GM12878 (cell line): ENCODE measurements at regions of chr5 and their contacts with region 1.

Region 1: GRCh38 chr5:73663860-73664240 is 37.9 kb downstream of the ARHGEF28 start:
- DNase-seq: peak; percentile 76
- ATAC-seq: peak; percentile 64
- H3K4me3 ChIP-seq: no peak overlapping the region
- H3K27ac ChIP-seq: peak overlapping the region; percentile 69
- H3K4me1 ChIP-seq: peaks cover 30% of the 10 kb centered on the region
- H3K27me3 ChIP-seq: no peaks in the 10 kb centered on the region
- CTCF ChIP-seq: no peak
- EP300 ChIP-seq: peak in 1 of 2 experiments; percentile 33; a peak in 1 of 4 replicates
- POLR2A ChIP-seq: no peak
- RAD21 ChIP-seq: no peak

Region 2: DNA sequence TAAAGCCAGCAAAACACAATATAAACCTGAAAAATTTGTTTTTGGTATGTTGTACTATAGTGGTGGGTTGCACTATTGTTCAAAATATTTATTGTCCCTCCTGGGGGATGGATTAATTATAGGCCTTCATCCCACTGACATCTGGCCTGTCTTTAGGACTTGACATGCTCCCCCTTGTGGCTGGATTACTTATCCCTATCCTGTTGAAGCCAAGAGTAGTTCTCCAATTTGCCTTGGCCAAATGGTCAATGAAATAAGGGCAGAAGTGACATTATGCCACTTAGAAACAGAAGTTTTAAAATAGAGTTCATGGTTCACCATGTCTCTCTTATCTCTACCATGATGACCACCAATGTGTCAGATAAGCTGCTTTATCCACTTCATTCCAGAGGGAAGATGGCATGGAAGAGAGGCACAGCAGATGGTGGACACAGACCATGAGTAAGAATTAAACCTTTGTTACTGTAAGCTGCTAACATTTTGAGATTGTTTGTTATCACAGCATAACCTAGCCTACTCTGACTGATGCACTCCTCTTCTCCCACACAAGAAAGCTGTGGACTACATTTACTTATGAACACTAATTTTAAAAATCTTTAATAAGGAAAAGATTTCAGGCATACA is 67.0 kb before region 1 on chr5:
- CTCF ChIA-PET with region 1: interaction called, 5 read pairs
- POLR2A ChIA-PET with region 1: no interaction called
- RAD21 ChIA-PET with region 1: no interaction called
- SMC1A ChIA-PET with region 1: interaction called, 27 read pairs
- in situ Hi-C with region 1: no loop called
- intact Hi-C with region 1: no loop called
- DNase-seq: no peak
- ATAC-seq: peak; percentile 65
- H3K4me3 ChIP-seq: no peak overlapping the region
- H3K27ac ChIP-seq: no peak overlapping the region
- H3K4me1 ChIP-seq: no peaks in the 10 kb centered on the region
- H3K27me3 ChIP-seq: no peaks in the 10 kb centered on the region
- CTCF ChIP-seq: peak; percentile 29 to 61 (median 57)
- EP300 ChIP-seq: no peak
- POLR2A ChIP-seq: no peak
- RAD21 ChIP-seq: 0 out of 2 replicates have a peak, but pooled peaks have one; percentile 15

Region 3: DNA sequence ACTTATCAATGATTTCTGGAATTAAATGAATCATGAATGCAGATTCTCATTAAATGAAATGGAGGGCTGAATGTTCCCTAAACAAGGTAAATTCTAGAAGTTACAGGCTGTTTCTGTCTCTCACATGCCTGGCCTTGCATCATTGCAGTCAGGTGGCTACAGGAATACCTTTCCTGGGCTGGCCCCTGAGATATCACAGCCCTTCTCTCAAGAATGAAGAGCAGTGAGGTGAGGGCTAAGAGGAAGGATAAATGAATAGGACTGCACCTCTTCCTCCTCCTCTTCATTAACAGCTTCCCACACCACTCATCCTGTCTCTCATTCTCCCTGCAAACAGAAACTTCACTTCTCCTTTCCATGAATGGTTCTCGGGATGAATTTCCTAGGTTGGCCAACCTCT is 15.3 kb before region 1 on chr5:
- CTCF ChIA-PET with region 1: interaction called, 5 read pairs
- POLR2A ChIA-PET with region 1: interaction called, 6 read pairs
- RAD21 ChIA-PET with region 1: interaction called, 24 read pairs
- SMC1A ChIA-PET with region 1: interaction called, 36 read pairs
- in situ Hi-C with region 1: no loop called
- intact Hi-C with region 1: no loop called
- DNase-seq: no peak
- ATAC-seq: no peak
- H3K4me3 ChIP-seq: no peak overlapping the region
- H3K27ac ChIP-seq: no peak overlapping the region
- H3K4me1 ChIP-seq: no peaks in the 10 kb centered on the region
- H3K27me3 ChIP-seq: no peaks in the 10 kb centered on the region; a peak in 1 of 4 replicates
- CTCF ChIP-seq: no peak
- EP300 ChIP-seq: no peak
- POLR2A ChIP-seq: no peak
- RAD21 ChIP-seq: no peak